GM12878 (cell line): ENCODE measurements at regions of chr2 and their contacts with region 1.

Region 1: DNA sequence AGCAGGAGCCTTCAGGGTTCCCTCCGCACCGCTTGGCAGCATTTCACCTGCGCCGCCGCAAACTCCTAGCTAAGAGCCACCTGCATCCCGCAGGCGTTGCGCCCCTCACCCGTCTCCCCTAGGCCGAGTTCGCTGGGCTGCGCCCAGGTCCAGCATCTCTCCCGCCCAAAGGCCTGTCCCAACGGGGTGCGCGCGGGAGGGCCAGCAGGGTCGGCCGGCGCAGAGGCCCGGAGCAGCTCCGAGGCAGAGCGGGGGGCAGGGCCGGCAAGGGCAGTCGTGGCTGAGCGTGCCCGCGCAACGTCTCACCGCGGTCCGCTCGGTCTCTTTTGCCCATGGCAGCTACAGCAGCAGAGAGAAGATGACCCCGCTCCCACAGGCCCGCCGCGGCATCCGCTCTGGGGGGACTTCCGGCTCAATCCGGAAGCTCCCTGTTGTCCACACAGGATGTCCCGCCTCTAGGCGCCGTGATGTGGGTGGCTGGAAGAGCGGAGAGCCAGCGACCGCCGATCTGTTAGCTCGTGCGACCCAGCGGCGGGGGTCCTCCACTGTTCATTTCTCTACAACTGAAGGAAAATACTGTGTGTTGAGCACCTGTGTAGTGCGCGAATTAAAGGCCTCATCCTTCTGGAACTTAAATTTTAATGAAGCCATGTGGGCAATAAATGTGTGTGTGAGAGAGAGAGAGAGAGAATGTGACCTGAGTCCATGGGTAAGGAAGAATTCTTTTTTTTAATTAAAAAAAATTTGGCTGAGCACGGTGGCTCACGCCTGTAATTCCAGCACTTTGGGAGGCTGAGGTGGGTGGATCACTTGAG is at the start of gene ERCC3:
- DNase-seq: peak; percentile 30
- ATAC-seq: peak; percentile 98
- H3K4me3 ChIP-seq: peak within 1 kb of the TSS; percentile 100
- H3K27ac ChIP-seq: peak within 1 kb of the TSS; percentile 83
- H3K4me1 ChIP-seq: no peaks in the 10 kb centered on the region
- H3K27me3 ChIP-seq: no peaks in the 10 kb centered on the region
- CTCF ChIP-seq: no peak
- EP300 ChIP-seq: no peak
- POLR2A ChIP-seq: peak; percentile 95
- RAD21 ChIP-seq: no peak
- polyA plus RNA-seq, gene ERCC3: 17.1 to 23.9 TPM

Region 2: GRCh38 chr2:127086990-127087790 is 206.8 kb before region 1 on chr2:
- CTCF ChIA-PET with region 1: no interaction called
- POLR2A ChIA-PET with region 1: no interaction called
- RAD21 ChIA-PET with region 1: no interaction called
- SMC1A ChIA-PET with region 1: no interaction called
- in situ Hi-C with region 1: no loop called
- intact Hi-C with region 1: loop called (anchors 10 kb)
- DNase-seq: peak; percentile 81
- ATAC-seq: peak; percentile 81
- H3K4me3 ChIP-seq: peak overlapping the region; percentile 23; the same call in 1 of the 2 replicates
- H3K27ac ChIP-seq: peak overlapping the region; percentile 42; the same call in 1 of the 2 replicates
- H3K4me1 ChIP-seq: peaks cover 38% of the 10 kb centered on the region
- H3K27me3 ChIP-seq: no peaks in the 10 kb centered on the region
- CTCF ChIP-seq: no peak
- EP300 ChIP-seq: peak; percentile 76 to 86; a peak in 2 of 4 replicates
- POLR2A ChIP-seq: no peak
- RAD21 ChIP-seq: no peak

Region 3: GRCh38 chr2:127254386-127254981 is 39.5 kb before region 1 on chr2:
- CTCF ChIA-PET with region 1: no interaction called
- POLR2A ChIA-PET with region 1: no interaction called
- RAD21 ChIA-PET with region 1: no interaction called
- SMC1A ChIA-PET with region 1: no interaction called
- in situ Hi-C with region 1: no loop called
- intact Hi-C with region 1: no loop called
- DNase-seq: no peak
- ATAC-seq: no peak
- H3K4me3 ChIP-seq: no peak overlapping the region
- H3K27ac ChIP-seq: no peak overlapping the region
- H3K4me1 ChIP-seq: no peaks in the 10 kb centered on the region
- H3K27me3 ChIP-seq: no peaks in the 10 kb centered on the region
- CTCF ChIP-seq: no peak
- EP300 ChIP-seq: no peak
- POLR2A ChIP-seq: no peak
- RAD21 ChIP-seq: no peak

Region 4: GRCh38 chr2:127277028-127277427 is 16.9 kb before region 1 on chr2:
- CTCF ChIA-PET with region 1: interaction called, 4 read pairs
- POLR2A ChIA-PET with region 1: interaction called, 11 read pairs
- RAD21 ChIA-PET with region 1: interaction called, 3 read pairs
- SMC1A ChIA-PET with region 1: interaction called, 13 read pairs
- in situ Hi-C with region 1: no loop called
- intact Hi-C with region 1: no loop called
- DNase-seq: peak; percentile 39
- ATAC-seq: peak; percentile 91
- H3K4me3 ChIP-seq: no peak overlapping the region
- H3K27ac ChIP-seq: 0 out of 2 replicates have a peak overlapping the region, but pooled peaks have one; percentile 9
- H3K4me1 ChIP-seq: peaks cover 6% of the 10 kb centered on the region; the same call in 1 of the 2 replicates
- H3K27me3 ChIP-seq: no peaks in the 10 kb centered on the region
- CTCF ChIP-seq: no peak
- EP300 ChIP-seq: 0 out of 4 replicates have a peak, but pooled peaks of 1 of the 2 experiments have one; percentile 18
- POLR2A ChIP-seq: no peak
- RAD21 ChIP-seq: no peak

Region 5: DNA sequence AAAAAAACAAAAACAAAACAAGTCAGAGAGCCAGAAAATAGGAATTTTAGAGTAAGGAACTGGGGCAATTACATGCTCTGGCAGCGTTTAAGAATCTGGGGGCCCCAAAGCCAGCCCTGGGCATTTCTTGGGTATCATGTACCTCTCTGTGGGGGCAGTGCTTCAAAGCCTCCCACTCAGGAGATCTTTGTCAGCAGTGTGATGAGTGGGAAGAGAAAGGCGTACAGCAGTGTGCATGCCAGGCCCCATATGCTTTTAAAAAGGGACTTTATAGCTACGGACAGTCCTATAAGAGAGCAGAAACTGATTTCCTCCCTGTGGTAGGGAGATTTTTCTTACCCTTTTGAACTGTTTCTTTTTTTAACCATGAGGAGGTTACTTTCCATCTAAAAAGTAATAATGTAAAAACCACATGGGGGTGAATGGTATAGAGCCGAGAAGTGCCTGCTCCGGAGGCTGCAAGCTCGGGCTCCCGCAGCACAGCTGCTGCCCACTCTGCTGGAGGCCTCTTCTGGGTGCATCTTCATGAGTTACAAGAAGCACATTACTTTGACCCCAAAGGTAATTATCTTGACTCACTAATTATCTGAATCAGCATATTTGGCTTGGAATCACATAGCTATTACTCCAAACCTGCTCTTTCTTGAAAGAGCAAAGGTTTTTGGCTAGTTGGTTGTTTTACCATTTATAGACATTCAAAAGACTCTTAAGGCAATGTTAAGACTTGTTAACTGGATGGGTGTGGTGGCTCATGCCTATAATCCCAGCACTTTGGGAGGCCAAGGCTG is 170.7 kb after region 1 on chr2:
- CTCF ChIA-PET with region 1: no interaction called
- POLR2A ChIA-PET with region 1: no interaction called
- RAD21 ChIA-PET with region 1: no interaction called
- SMC1A ChIA-PET with region 1: no interaction called
- in situ Hi-C with region 1: no loop called
- intact Hi-C with region 1: no loop called
- DNase-seq: no peak
- ATAC-seq: no peak
- H3K4me3 ChIP-seq: no peak overlapping the region
- H3K27ac ChIP-seq: no peak overlapping the region
- H3K4me1 ChIP-seq: no peaks in the 10 kb centered on the region
- H3K27me3 ChIP-seq: no peaks in the 10 kb centered on the region
- CTCF ChIP-seq: no peak
- EP300 ChIP-seq: no peak
- POLR2A ChIP-seq: no peak
- RAD21 ChIP-seq: no peak